ENCODE measurements at regions of chr5 and their contacts with region 1.

Region 1: DNA sequence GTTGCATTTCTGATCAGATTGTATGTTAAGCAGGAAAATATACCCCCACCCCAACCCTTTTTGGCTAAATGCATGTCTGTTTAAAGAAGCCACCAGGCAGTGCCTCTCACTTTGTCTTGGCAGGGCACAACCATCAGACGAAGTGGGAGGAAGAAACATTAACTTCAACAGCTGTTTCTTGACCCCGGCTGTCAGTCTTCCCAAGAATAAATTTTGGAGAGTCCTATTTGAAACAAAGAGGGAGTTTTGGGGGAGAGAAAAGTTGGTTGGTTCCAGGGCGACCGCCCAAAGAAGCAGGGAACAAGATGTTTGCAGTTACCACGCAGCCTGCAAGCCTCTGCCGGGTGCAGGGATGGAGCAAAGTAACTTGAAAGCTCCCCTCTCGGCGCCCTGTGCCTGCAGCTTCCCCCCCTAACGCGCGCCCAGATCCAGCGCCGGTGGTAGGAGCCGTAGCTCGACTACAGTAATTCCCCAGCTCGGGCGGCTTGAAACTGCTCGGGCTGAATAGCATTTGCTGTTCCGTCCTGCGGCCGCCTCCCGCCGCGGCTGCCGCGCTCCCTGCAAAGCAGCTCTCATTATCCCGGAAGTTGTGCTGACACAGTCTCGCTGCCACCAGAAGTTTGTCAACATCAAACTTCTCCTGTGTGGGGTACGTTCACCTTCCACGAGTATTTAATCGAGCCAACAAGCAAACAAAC is 100.7 kb upstream of the SSBP2 start:
- DNase-seq: peak; percentile 85 to 97
- H3K4me3 ChIP-seq: peak overlapping the region; percentile 59 to 73
- H3K27ac ChIP-seq: peak overlapping the region; percentile 88 to 90
- H3K4me1 ChIP-seq: peaks cover 0 to 38% of the 10 kb centered on the region in 2 donors
- H3K27me3 ChIP-seq: no peaks in the 10 kb centered on the region
- CTCF ChIP-seq: no peak

Region 2: DNA sequence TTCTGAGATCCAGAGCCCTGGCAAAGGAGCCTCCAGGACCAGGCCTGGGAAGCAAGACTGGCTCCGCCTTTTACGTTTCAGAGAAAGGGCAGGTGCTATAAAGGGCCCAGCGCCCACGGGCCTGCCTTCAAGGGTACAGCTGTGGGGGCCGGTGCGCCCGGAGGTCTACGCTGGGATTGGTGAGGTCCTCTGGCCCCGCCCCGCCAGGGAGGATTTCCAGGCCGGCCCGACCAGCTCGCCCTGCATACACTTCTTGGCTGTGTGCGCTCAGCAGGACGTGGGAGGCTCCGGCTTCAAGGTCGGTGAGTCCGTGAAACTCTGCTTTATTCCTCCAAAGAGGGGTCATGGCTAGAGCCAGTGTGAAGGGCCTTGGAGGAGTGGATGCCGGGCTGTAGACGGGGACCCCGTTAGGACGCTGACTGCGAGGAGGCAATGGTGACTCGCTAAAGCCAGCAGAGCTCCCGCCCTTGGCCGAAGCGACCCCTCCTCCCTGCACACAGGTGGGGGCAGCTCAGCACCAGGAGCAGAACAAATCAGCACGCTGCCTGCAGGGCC is 618.5 kb before region 1 on chr5 and contains the start of gene CKMT2:
- intact Hi-C with region 1: loop called (anchors 2 kb)
- DNase-seq: peak; percentile 71 to 90
- H3K4me3 ChIP-seq: peak within 1 kb of the TSS; percentile 55 to 70
- H3K27ac ChIP-seq: peak within 1 kb of the TSS; percentile 93 to 98
- H3K4me1 ChIP-seq: peaks cover 11 to 27% of the 10 kb centered on the region in 2 donors
- H3K27me3 ChIP-seq: no peaks in the 10 kb centered on the region
- CTCF ChIP-seq: no peak
- total RNA-seq, gene CKMT2: 0.43 TPM

Region 3: GRCh38 chr5:81425569-81425968 is 426.1 kb before region 1 on chr5:
- intact Hi-C with region 1: loop called (anchors 5 kb)
- DNase-seq: no peak
- H3K4me3 ChIP-seq: no peak overlapping the region
- H3K27ac ChIP-seq: peak overlapping the region; percentile 22 to 51
- H3K4me1 ChIP-seq: peaks cover 0 to 6% of the 10 kb centered on the region in 2 donors
- H3K27me3 ChIP-seq: no peaks in the 10 kb centered on the region
- CTCF ChIP-seq: peak; percentile 41 to 62 (median 54)

Region 4: DNA sequence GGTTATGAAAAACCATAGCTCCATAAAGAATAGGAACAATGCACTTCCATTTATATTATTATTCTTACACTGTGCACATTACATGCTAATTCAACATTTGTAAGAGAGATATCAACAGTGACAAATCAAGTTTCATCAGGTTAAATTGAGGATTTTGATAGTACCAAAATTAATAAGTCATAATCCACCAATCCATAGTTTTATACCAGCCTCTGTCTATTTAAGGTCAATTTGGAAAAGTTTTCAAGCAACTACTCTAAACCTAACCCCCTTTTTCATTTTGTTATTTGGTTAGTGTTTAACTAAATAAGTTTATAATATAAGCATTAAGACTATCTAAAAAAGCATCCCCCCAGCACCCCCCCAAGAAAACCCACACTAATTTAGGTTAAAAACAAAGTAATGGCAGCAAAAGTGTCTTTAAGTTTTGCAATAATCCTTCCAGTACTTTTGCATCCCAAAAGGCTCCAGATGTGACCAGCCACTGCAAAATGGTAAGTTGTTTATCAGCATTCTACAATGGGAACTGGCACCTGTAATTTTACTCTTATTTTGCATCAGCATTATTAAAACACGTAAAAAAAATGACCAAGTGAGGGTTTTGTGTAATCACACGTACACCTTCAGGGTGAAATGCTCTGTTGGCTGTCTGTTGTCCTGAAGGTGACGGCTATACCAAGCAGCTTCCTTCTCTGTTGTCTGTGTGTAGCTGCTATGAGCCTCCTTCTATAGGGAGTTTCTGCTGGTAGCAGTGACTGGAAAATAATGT is 64.0 kb before region 1 on chr5:
- intact Hi-C with region 1: loop called (anchors 1 kb)
- DNase-seq: peak in 1 of 2 donors; percentile 83
- H3K4me3 ChIP-seq: peak overlapping the region in 1 of 2 donors; percentile 33
- H3K27ac ChIP-seq: peak overlapping the region in 1 of 2 donors; percentile 12
- H3K4me1 ChIP-seq: peaks cover 0 to 13% of the 10 kb centered on the region in 2 donors
- H3K27me3 ChIP-seq: no peaks in the 10 kb centered on the region
- CTCF ChIP-seq: no peak

Region 5: GRCh38 chr5:81800797-81801196 is 50.8 kb before region 1 on chr5:
- intact Hi-C with region 1: no loop called
- DNase-seq: no peak
- H3K4me3 ChIP-seq: no peak overlapping the region
- H3K27ac ChIP-seq: no peak overlapping the region
- H3K4me1 ChIP-seq: no peaks in the 10 kb centered on the region
- H3K27me3 ChIP-seq: no peaks in the 10 kb centered on the region
- CTCF ChIP-seq: no peak

Measured in ascending aorta (tissue), 2 donors.